Left ventricle myocardium superior (tissue), 1 donor: ENCODE measurements at regions of chr2 and their contacts with region 1.

Region 1: DNA sequence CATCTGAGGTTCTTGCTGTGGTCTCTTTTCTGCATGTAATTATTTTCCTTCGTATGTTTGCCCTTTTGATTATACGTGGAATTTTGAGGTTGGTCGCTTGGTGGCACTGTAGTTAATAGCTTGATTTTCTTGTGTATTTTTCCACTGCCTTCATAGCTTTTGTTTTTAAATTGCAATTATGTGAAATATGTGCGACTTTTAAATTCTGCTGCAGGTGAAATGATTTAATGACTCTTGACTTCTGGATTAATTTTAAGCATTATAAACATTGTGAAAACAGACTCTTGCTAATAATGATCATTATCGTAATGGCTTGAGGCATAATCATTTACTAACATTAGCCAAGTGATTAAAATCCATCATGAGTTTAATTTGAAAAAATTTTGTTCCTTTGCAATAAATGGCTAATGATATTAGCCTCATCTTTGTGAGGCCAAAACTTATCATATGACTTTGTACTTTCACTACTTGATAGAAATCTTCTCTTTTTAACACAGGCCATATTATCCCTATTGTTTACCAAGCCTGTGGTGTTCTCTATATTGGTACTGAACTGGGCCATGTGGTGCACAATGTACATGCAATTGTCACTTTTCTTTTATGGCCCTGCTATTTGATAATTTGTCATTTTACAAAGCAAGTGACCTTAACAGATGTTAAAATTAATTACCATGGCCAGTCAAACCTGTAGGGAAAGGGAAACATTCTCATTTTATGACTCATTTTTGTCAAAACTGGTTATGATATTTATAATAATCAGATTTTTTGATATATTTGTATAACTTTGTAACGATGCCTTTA is 62.8 kb upstream of the NEUROD1 start:
- DNase-seq: no peak
- ATAC-seq: no peak

Region 2: DNA sequence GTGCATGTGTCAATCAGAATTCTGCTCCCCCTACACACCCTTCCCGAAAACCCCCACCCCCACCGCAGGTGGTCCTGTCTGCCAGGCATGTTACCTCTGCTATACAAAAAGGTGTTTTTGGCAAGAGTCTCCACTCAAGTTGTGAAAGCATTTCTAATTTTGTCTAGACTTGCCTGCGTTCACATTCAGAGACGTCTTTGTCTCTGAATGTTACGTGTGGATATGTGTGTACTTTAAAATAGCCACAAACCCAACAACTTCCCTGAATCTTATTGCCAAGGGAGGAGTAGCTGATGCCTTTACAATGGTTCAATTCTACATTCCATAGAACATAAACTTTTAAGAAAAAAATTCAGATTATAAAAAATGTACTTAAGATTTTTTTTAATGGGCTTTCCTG is 219.4 kb before region 1 on chr2:
- intact Hi-C with region 1: no loop called
- DNase-seq: no peak
- ATAC-seq: no peak

Region 3: DNA sequence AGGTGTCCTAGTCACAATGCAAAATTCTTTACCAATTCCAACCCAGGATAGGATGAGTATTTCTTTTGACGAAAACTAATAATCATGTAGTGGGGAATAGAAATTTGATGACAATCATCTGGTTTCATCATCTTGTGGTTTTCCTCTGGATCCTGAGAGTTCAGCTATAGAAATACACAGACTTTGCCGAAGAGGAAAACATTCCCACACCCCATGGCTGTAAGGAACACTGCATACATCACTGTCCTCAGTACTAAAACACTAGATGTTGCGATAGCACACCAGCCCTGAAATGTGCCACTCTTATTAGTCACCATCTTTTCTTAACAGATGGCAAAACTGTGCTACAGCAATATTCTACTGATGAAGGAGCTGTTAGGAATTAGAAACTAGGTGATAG is 115.6 kb before region 1 on chr2:
- intact Hi-C with region 1: no loop called
- DNase-seq: no peak
- ATAC-seq: no peak

Region 4: GRCh38 chr2:181904022-181904632 is 161.0 kb after region 1 on chr2:
- intact Hi-C with region 1: loop called (anchors 10 kb)
- DNase-seq: no peak
- ATAC-seq: peak; percentile 41

Region 5: DNA sequence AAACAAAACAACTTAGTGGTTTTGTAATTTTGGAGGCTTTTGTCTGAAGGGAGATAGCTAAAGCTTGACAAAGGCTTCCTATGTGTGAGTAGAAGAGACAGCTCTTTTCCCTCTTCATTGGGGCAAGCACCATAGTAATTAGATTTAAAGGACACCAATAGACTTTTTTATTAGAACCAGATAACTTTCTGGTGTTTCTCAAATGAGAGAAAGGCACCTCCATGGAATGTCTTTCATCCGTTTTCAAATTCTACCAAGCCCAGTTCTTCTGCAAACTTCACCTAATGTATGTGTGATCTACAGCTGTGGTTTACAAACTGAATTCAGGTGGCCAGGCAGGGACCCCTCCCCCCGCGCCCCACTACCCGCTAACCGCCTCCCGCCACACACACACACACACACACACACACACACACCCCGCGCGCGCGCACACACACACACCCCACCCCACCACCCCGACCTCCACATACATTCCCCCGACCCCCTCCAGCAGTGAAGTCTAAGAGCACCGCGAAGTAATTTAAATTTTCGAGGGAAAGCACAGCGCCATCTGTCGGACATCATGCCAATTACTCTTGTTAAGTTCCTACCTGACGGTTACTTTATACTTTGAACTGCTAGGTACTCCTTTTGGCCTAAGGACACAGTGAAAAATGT is 210.9 kb after region 1 on chr2:
- intact Hi-C with region 1: loop called (anchors 10 kb)
- DNase-seq: peak; percentile 44
- ATAC-seq: peak; percentile 68